CD4-positive, alpha-beta T cell (primary cell): ENCODE measurements at regions of chr14 and their contacts with region 1.

Region 1: DNA sequence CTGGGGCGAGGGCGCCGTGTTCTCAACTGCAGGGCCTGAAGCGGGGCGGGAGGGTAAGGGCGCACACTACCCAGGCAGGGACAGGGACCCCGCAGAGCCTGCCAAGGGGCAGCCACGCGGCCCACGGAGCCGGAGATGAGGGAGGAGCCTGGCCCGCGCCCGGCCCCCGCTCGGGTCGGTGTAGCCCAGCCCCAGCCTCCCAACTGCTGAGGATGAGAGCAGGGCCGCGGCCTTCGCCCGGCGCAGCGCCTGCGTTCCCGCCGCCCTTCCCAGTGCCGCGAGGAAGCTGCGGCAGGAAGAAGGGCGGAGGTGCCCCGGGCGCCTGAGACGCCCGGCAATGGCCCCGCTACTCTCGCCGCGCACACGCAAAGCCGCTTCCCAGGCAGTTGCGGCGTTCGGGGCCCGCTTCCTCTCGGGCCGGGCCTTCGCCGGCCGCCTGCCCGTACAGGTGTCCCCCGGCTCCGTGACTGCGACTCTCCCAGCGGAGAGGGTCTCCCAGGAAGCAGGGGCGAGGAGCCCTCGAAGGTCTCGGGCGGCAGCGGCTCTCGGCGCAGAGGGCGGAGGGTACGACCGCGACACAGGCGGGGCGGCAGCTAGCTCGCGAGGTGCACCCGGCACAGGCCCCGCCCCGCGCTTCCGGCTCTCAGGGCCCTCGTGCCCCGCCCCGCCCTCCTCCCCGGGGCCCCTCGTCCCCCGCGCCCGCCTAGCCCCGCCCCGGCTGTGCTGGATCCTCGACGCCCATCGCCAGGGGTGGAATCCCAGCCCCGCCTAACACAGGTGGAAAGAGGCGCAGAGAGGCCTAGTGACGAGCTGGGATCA is 24.8 kb upstream of the YY1 start:
- DNase-seq: peak; percentile 83 to 98 (median 92)
- ATAC-seq: peak; percentile 96
- H3K4me3 ChIP-seq: peak overlapping the region; percentile 66
- H3K4me3 Mint-ChIP-seq: peak overlapping the region; percentile 89
- H3K27ac ChIP-seq: peak overlapping the region; percentile 79 to 89
- H3K27ac Mint-ChIP-seq: peak overlapping the region; percentile 91
- H3K4me1 ChIP-seq: peaks cover 32% of the 10 kb centered on the region
- H3K4me1 Mint-ChIP-seq: peaks cover 32% of the 10 kb centered on the region
- H3K27me3 ChIP-seq: no peaks in the 10 kb centered on the region
- H3K27me3 Mint-ChIP-seq: no peaks in the 10 kb centered on the region
- CTCF ChIP-seq: no peak

Region 2: DNA sequence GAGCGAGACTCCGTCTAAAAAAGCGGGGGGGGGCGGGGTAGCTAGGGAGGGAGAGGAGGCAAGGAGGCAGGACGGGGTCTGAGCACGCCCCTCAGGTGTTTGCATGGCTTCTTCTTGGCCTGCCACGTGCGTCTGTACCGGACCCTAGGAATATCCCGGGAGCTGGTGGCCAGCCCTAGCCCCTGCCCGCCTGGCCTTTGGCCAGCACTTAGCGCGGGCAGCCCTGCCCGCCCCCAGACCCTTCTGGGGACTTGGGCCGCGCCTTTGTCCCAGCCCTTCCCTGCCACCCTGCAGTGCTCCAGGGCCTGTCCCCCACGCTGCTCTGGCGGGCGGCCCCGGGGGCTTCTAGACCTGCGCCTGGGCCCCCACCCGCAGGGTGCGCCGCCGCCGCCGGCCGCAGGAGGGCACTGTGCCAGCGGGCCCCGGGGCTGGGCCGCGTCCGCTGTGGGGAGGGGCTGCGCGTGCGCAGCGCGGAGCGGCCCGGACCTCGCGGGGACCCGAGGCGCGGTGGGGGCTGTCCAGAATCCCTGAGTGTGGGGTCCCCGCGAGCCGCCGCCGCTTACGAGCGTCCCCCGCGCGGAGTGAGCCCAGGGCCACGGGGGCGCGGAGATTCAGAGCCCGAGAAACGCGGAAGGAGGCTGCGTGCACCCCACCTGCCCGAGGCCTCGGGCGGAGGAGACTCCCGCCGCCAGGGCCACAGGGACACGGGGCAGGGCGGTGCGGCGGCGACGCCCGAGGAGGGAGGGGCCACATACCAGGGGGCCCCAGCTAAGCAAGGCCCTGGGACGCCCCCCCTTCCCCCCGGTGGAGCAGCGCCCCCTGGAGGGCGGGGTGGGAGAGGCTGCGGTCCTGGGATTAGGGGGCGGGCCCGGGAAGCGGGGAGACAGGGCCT is 71.1 kb after region 1 on chr14:
- CTCF ChIA-PET with region 1: no interaction called
- POLR2A ChIA-PET with region 1: no interaction called
- intact Hi-C with region 1: loop called in 1 of 2 experiments (anchors 2 kb)
- DNase-seq: peak; percentile 60 to 91 (median 76)
- ATAC-seq: peak; percentile 92
- H3K4me3 ChIP-seq: peak overlapping the region; percentile 59
- H3K4me3 Mint-ChIP-seq: peak overlapping the region; percentile 80
- H3K27ac ChIP-seq: peak overlapping the region in 1 of 2 donors; percentile 79
- H3K27ac Mint-ChIP-seq: peak overlapping the region; percentile 42
- H3K4me1 ChIP-seq: peaks cover 15% of the 10 kb centered on the region
- H3K4me1 Mint-ChIP-seq: no peaks in the 10 kb centered on the region
- H3K27me3 ChIP-seq: no peaks in the 10 kb centered on the region
- H3K27me3 Mint-ChIP-seq: no peaks in the 10 kb centered on the region
- CTCF ChIP-seq: peak; percentile 96